Activated naive CD4-positive, alpha-beta T cell treated with anti-CD3 and anti-CD28 coated beads for 36 hours (primary cell): ENCODE measurements at regions of chr14 and their contacts with region 1.

Region 1: GRCh38 chr14:73058224-73058921 is at the start of gene RBM25:
- DNase-seq: peak; percentile 97
- H3K4me3 Mint-ChIP-seq: no peak within 1 kb of the TSS
- H3K27ac Mint-ChIP-seq: no peak within 1 kb of the TSS
- H3K4me1 Mint-ChIP-seq: peaks cover 42% of the 10 kb centered on the region
- H3K27me3 Mint-ChIP-seq: no peaks in the 10 kb centered on the region
- total RNA-seq, gene RBM25: 86.3 to 93.6 TPM

Region 2: DNA sequence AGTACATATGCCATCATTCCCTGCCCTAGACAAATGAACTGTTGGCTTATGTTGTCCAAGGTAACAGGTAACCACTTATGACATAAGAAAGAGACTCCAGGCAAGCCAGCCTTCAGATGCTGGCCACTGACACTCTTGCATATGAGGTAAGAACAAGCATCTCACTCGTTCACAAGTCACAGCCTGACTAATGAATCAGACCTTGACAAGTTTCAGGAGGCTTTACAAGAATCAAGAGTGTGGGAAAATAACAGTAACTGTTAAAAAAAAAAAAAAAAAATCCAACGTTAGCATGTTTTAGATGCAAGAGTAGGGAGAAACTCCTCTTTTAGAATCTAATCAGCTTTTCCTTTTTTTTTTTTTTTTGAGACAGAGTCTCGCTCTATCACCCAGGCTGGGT is 72.2 kb before region 1 on chr14:
- CTCF ChIA-PET with region 1: no interaction called
- intact Hi-C with region 1: loop called (anchors 2 kb)
- DNase-seq: no peak
- H3K4me3 Mint-ChIP-seq: no peak overlapping the region
- H3K27ac Mint-ChIP-seq: no peak overlapping the region
- H3K4me1 Mint-ChIP-seq: peaks cover 2% of the 10 kb centered on the region
- H3K27me3 Mint-ChIP-seq: no peaks in the 10 kb centered on the region

Region 3: DNA sequence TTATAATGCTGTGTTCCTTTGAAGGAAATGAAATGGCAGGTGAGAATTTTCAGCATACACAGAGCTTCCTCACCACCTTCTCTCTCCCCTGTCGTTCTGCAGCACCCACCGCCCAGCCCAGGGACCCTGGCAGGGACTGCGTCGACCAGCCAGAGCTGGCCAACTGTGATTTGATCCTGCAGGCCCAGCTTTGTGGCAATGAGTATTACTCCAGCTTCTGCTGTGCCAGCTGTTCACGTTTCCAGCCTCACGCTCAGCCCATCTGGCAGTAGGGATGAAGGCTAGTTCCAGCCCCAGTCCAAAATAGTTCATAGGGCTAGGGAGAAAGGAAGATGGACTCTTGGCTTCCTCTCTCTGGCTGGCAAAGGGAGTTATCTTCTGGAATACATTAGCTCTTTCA is 214.0 kb after region 1 on chr14:
- CTCF ChIA-PET with region 1: no interaction called
- intact Hi-C with region 1: no loop called
- DNase-seq: no peak
- H3K4me3 Mint-ChIP-seq: no peak overlapping the region
- H3K27ac Mint-ChIP-seq: no peak overlapping the region
- H3K4me1 Mint-ChIP-seq: peaks cover 8% of the 10 kb centered on the region
- H3K27me3 Mint-ChIP-seq: peaks cover 17% of the 10 kb centered on the region

Region 4: DNA sequence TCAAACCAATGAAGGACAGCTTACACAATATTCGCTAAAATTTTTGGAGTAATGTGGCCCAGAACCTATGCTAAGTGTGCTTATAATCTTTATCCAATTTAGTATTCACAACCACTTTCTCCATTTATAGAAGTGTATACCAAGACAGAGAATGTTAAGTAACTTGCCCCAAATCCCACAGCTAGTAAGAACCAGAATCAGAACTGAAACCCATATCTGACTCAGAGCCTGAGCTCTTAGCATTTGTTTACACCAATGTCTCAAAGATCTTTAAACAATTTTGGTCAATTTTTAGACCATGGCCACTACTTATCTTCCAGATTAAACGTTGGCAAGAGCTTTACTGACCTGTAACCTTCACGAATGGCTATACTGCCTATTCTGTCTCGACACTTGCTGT is 231.9 kb after region 1 on chr14:
- CTCF ChIA-PET with region 1: no interaction called
- intact Hi-C with region 1: loop called (anchors 1 kb)
- DNase-seq: peak; percentile 42
- H3K4me3 Mint-ChIP-seq: no peak overlapping the region
- H3K27ac Mint-ChIP-seq: no peak overlapping the region
- H3K4me1 Mint-ChIP-seq: peaks cover 24% of the 10 kb centered on the region
- H3K27me3 Mint-ChIP-seq: no peaks in the 10 kb centered on the region

Region 5: GRCh38 chr14:73568381-73568781 is 510.0 kb after region 1 on chr14:
- CTCF ChIA-PET with region 1: interaction called, 3 read pairs
- intact Hi-C with region 1: loop called (anchors 1 kb)
- DNase-seq: peak; percentile 69
- H3K4me3 Mint-ChIP-seq: peak overlapping the region; percentile 83
- H3K27ac Mint-ChIP-seq: peak overlapping the region; percentile 95
- H3K4me1 Mint-ChIP-seq: peaks cover 46% of the 10 kb centered on the region
- H3K27me3 Mint-ChIP-seq: no peaks in the 10 kb centered on the region

Region 6: GRCh38 chr14:73949744-73950734 is 891.7 kb after region 1 on chr14 and contains the starts of genes COQ6 and FAM161B:
- CTCF ChIA-PET with region 1: no interaction called
- intact Hi-C with region 1: loop called (anchors 1 kb)
- DNase-seq: peak; percentile 95
- H3K4me3 Mint-ChIP-seq: peak within 1 kb of the TSS; percentile 98
- H3K27ac Mint-ChIP-seq: peak within 1 kb of the TSS; percentile 90
- H3K4me1 Mint-ChIP-seq: peaks cover 21% of the 10 kb centered on the region
- H3K27me3 Mint-ChIP-seq: no peaks in the 10 kb centered on the region
- total RNA-seq, gene COQ6: 17.6 to 17.7 TPM
- total RNA-seq, gene FAM161B: 1.5 to 1.6 TPM